ENCODE measurements at regions of chr2 and their contacts with region 1.

Region 1: DNA sequence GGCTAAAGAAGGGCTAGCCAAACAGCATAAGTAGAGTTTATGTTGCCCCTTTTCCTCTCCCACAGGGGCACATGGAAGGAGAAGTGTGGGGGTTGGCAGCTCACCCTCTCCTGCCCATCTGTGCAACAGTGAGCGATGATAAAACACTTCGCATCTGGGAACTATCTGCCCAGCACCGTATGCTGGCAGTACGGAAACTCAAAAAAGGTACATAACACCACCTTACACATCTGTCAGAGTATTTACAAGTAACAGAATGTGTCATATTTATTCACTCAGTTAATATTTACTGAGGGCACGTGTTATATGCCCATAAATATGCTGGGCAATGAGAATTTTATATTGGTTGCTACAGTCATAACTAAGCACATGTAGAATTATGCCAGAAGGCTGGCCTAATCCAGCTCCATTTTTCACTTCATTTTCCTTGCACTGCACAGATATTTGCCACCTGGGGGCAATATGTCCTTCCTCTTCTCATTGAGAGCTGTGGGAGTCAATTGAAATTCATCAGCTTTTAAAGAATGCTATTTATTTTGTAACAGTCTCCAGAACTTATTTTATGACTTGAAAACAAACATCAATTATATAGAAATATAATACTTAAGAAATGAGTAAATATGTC is 150.6 kb downstream of the RTN4 start:
- DNase-seq: no peak
- H3K4me3 Mint-ChIP-seq: no peak overlapping the region
- H3K27ac Mint-ChIP-seq: no peak overlapping the region
- H3K4me1 Mint-ChIP-seq: peaks cover 27% of the 10 kb centered on the region
- H3K27me3 Mint-ChIP-seq: no peaks in the 10 kb centered on the region

Region 2: DNA sequence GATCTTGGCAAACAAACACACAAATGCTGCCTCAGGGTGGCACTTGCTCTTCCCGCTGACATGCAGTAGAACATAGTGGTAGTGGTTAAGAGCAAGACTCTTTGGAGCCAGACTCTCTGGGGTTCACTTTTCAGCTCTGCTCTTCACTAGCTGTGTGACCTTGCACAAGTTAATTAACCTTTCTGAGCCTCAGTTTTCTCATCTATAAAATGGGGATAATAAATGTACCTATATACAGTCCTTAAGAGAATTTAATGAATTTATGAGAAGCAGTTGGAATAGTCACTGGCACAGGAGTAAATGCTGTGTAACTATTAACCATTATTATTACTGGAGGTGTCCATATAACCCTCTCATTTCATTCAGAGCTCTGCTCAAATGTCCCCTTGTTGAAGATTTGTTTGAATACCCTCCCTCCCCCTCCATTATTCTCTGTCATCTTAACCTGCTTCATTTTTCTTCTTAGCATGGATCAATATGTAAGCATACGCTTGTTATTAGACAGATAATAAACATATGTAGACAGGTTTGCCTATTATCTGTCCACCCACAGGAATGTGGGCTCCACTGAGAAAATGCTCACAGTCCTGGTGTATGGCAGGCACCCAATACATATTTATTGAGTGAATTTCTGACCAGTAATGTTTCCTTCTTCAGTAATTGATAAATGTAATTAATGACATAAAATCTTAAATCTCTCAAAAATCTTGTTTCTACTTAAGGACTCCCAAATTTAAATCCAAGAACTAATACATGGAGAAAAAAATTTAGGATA is 708.1 kb before region 1 on chr2:
- CTCF ChIA-PET with region 1: no interaction called
- intact Hi-C with region 1: no loop called
- DNase-seq: no peak
- H3K4me3 Mint-ChIP-seq: no peak overlapping the region
- H3K27ac Mint-ChIP-seq: no peak overlapping the region
- H3K4me1 Mint-ChIP-seq: no peaks in the 10 kb centered on the region
- H3K27me3 Mint-ChIP-seq: no peaks in the 10 kb centered on the region

Region 3: GRCh38 chr2:54879598-54880332 is 19.9 kb before region 1 on chr2:
- CTCF ChIA-PET with region 1: no interaction called
- intact Hi-C with region 1: no loop called
- DNase-seq: no peak
- H3K4me3 Mint-ChIP-seq: no peak overlapping the region
- H3K27ac Mint-ChIP-seq: no peak overlapping the region
- H3K4me1 Mint-ChIP-seq: no peaks in the 10 kb centered on the region
- H3K27me3 Mint-ChIP-seq: peaks cover 3% of the 10 kb centered on the region

Region 4: GRCh38 chr2:54942373-54942772 is 42.7 kb after region 1 on chr2:
- CTCF ChIA-PET with region 1: no interaction called
- intact Hi-C with region 1: loop called (anchors 2 kb)
- DNase-seq: peak; percentile 45
- H3K4me3 Mint-ChIP-seq: no peak overlapping the region
- H3K27ac Mint-ChIP-seq: no peak overlapping the region
- H3K4me1 Mint-ChIP-seq: peaks cover 4% of the 10 kb centered on the region
- H3K27me3 Mint-ChIP-seq: no peaks in the 10 kb centered on the region

Region 5: GRCh38 chr2:55168221-55169154 is 268.8 kb after region 1 on chr2:
- CTCF ChIA-PET with region 1: interaction called, 23 read pairs
- intact Hi-C with region 1: loop called (anchors 1 kb)
- DNase-seq: peak; percentile 62
- H3K4me3 Mint-ChIP-seq: no peak overlapping the region
- H3K27ac Mint-ChIP-seq: no peak overlapping the region
- H3K4me1 Mint-ChIP-seq: peaks cover 3% of the 10 kb centered on the region
- H3K27me3 Mint-ChIP-seq: no peaks in the 10 kb centered on the region

Region 6: GRCh38 chr2:55419679-55420438 is 520.2 kb after region 1 on chr2 and contains the start of gene CCDC88A:
- CTCF ChIA-PET with region 1: no interaction called
- intact Hi-C with region 1: loop called (anchors 5 kb)
- DNase-seq: peak; percentile 89
- H3K4me3 Mint-ChIP-seq: peak within 1 kb of the TSS; percentile 86
- H3K27ac Mint-ChIP-seq: peak within 1 kb of the TSS; percentile 53
- H3K4me1 Mint-ChIP-seq: peaks cover 18% of the 10 kb centered on the region
- H3K27me3 Mint-ChIP-seq: peaks cover 10% of the 10 kb centered on the region
- total RNA-seq, gene CCDC88A: 9.7 to 10.7 TPM